PC-9 (cell line): ENCODE measurements at regions of chr12 and their contacts with region 1.

Region 1: GRCh38 chr12:89359615-89360014 is 7.3 kb upstream of the DUSP6 start:
- DNase-seq: no peak
- H3K4me3 ChIP-seq: no peak overlapping the region
- H3K27ac ChIP-seq: no peak overlapping the region
- H3K4me1 ChIP-seq: peaks cover 23% of the 10 kb centered on the region
- H3K27me3 ChIP-seq: no peaks in the 10 kb centered on the region
- CTCF ChIP-seq: no peak

Region 2: DNA sequence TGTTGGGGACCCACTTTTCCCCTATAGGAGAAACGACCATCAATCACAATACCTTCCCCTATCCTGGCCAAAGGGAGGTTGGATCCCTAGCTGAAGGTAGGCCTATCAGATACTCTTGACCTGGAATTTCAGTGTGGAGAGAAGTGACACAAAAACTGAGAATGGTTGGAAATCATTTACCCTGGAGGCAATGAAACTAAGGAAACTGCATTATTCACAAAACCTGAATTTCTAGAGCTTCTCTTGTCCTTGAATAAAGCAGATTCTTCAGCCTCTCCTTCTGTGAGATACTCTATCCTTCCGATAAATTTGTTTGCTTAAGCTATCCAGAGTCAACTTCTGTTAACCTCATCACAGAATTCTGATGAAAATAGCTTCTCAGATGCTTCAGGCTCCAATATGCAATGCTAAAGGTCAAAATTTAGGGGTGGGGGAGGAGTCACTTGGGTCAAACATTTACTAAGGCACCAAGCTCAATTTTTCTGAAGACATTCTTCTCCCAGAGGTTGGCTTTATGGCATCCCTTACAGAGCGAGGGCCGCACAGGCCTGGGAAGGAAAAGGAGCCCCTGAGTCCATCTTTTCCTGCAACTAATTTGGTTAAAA is 19.7 kb after region 1 on chr12:
- CTCF ChIA-PET with region 1: interaction called, 9 read pairs
- POLR2A ChIA-PET with region 1: interaction called, 16 read pairs
- intact Hi-C with region 1: no loop called
- DNase-seq: no peak
- H3K4me3 ChIP-seq: no peak overlapping the region
- H3K27ac ChIP-seq: no peak overlapping the region
- H3K4me1 ChIP-seq: peaks cover 14% of the 10 kb centered on the region
- H3K27me3 ChIP-seq: no peaks in the 10 kb centered on the region
- CTCF ChIP-seq: no peak